HEK293T (cell line): ENCODE measurements at regions of chr5 and their contacts with region 1.

Region 1: DNA sequence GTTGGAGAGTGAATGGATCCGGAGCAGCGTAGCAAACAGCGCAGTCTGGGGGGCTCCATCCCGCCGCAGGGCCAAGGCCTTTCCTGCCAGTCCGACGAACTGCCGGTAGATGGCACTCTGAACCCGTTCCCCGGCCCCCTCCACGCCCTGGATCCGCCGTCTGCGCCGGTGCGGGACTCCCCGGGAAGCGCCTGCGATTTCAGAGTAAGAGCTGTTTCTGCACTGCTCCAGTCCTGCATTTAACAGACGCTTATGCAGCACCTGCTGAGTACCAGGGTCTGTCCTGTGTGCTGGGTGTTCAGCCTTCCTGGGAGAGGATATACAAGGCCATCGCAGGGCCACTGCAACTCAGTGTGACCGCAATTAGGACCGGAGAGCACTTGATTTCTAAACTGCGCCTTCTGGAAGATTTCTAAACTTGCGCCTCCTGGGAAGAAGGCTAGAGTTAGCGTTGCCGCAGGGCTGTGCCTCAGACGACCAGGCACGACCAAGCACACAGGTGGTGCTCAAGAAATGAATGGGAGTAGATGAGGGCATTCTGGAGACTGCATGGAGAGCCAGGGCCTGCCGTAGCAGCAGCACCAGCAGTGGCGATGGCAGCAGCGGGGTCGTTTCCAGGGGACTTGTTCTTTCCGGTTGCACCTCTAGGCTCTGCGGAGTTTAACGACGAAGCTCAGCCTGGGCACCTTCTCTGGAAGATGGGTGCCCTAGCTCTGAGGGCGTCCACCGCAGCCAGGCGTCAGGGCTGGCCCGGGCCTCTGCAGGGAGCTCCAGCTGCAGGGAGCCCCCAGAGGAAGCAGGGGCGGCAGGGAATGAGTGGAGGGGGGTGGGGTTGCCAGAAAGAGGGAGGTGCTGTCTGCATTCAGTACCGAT is 14.3 kb upstream of the TIFAB start:
- DNase-seq: peak; percentile 88

Region 2: GRCh38 chr5:135356522-135357318 is 109.7 kb before region 1 on chr5:
- CTCF ChIA-PET with region 1: no interaction called
- POLR2A ChIA-PET with region 1: no interaction called
- DNase-seq: no peak

Region 3: GRCh38 chr5:135476615-135477582 is 10.5 kb after region 1 on chr5:
- CTCF ChIA-PET with region 1: interaction called, 12 read pairs
- POLR2A ChIA-PET with region 1: no interaction called
- DNase-seq: no peak

Region 4: DNA sequence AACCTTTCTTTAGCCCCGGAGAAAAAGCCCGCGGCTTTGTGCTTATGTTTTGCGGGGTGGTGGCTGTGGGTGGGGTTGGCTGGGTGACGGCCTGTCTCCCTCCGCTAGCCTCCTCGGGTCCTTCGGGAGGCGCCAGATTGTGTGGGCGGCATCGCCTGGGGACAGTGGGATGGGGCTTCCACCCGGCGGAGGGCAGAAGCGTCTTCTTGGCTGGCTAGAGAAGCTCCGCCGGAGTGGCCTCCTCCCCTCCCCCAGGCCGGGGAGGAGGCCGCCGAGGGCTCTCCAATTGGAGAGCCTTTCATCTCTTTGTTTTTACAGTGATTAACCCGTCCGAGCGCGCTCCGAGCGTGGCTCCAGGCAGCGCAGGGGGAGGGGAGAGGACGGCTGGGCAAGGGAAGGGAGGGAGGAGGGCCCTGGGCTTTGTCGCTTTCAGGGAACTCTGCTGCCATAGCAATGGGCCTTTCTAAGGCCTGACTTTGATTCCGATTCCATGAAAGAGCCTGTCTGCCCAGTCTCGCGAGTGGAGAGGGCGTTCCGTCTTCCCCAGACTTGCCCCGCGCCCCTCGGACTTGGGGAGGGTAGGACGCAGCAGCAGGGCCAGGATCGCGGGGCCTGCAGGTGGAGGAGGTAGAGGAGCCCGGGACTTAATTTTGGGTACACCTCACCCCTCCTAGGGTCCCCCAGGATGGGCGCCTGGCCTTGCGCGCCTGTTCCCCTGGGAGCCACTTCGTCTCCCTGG is 22.5 kb after region 1 on chr5:
- CTCF ChIA-PET with region 1: interaction called, 14 read pairs
- POLR2A ChIA-PET with region 1: interaction called, 4 read pairs
- DNase-seq: peak; percentile 80

Region 5: GRCh38 chr5:135533334-135533733 is 66.9 kb after region 1 on chr5:
- CTCF ChIA-PET with region 1: interaction called, 11 read pairs
- POLR2A ChIA-PET with region 1: no interaction called
- DNase-seq: no peak

Region 6: GRCh38 chr5:135551593-135552447 is 85.4 kb after region 1 on chr5:
- CTCF ChIA-PET with region 1: interaction called, 450 read pairs
- POLR2A ChIA-PET with region 1: interaction called, 25 read pairs
- DNase-seq: peak; percentile 79

Region 7: GRCh38 chr5:135560858-135561257 is 94.4 kb after region 1 on chr5:
- CTCF ChIA-PET with region 1: interaction called, 450 read pairs
- POLR2A ChIA-PET with region 1: interaction called, 4 read pairs
- DNase-seq: peak; percentile 82